BJ (cell line): ENCODE measurements at regions of chr17 and their contacts with region 1.

Region 1: DNA sequence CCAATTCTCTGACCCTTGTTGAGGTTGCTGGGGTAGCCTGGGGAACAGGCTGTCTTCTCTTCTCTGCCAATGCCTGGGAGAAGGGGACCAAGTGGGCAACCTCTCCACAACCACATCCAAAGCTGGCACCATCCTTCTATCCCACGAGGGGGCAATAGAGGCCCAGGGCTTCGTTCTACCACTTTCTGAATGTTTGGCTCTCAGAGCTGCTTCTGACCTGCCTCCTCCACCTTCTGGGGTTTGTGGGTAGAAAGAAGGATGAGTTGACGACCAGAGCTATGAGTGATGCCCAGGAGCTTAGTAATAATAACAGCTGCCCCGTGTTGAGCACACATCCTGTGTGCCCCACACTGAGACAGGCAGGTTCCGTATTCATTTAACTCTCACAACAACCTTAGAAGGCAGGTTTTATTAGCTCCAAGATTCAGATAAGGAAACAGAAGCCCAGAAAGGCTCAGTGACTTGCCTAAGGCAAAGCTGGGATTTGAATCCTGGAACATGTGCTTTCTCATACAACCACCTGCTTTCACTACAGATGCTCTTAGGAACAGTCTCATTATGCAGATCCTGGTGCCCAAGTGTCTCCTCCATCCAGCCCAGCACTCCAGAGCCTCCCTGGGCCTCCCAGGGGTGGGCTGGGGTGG is 11.1 kb downstream of the TSPOAP1 start:
- DNase-seq: peak; percentile 14
- H3K4me3 ChIP-seq: no peak overlapping the region
- H3K27me3 ChIP-seq: no peaks in the 10 kb centered on the region
- CTCF ChIP-seq: peak; percentile 84

Region 2: DNA sequence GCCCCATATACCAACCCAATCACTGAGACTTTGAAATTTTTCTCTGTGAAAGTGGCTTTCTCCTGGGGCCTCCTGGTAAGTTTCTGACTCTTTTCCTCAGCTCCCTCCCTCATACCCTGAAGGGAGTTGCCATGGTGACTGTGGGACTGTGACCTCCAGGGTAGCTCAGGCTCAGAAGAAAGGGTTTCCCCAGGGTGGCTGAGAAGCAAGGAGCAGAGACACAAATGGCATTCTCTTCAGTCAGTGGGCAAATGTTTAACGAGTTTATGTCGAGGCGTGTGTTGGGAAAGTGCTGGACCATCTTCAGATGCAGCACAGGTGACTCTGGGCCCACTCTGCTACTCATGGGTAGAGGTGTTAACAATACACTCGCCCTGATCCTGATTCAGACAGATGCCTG is 514.5 kb before region 1 on chr17:
- CTCF ChIA-PET with region 1: no interaction called
- POLR2A ChIA-PET with region 1: no interaction called
- DNase-seq: no peak
- H3K4me3 ChIP-seq: no peak overlapping the region
- H3K27me3 ChIP-seq: peaks cover 1% of the 10 kb centered on the region
- CTCF ChIP-seq: no peak

Region 3: DNA sequence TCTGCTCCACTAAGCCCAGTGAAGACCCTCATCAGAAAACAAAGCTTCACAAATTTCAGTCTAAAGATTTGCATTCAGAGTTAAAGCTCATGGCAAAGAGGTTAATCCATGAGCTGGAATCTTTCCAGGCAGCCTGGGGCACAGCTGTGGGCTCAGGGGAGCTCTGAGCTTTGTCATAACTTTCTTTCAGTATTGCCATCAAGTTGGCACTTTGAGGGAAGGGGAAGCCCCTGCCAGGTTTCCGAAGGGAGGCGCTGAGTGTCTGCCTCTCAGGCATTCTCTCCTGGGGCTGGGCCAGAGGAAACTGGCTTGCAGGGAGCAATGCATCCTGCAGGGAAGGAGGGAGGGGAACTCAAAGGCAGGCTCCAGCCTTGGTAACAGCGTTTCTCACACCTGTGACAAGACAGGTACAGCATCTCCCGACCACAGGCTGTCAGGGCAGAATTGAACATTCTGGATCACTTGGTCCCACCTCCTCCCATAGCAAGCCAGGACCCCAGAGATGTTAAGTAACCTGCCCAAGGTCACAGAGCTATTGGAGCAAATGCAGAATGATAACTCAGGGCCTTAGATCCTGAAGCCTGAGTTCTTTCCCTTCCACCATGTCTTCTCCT is 75.3 kb before region 1 on chr17:
- CTCF ChIA-PET with region 1: no interaction called
- POLR2A ChIA-PET with region 1: no interaction called
- DNase-seq: no peak
- H3K4me3 ChIP-seq: no peak overlapping the region
- H3K27me3 ChIP-seq: peaks cover 16% of the 10 kb centered on the region
- CTCF ChIP-seq: no peak

Region 4: DNA sequence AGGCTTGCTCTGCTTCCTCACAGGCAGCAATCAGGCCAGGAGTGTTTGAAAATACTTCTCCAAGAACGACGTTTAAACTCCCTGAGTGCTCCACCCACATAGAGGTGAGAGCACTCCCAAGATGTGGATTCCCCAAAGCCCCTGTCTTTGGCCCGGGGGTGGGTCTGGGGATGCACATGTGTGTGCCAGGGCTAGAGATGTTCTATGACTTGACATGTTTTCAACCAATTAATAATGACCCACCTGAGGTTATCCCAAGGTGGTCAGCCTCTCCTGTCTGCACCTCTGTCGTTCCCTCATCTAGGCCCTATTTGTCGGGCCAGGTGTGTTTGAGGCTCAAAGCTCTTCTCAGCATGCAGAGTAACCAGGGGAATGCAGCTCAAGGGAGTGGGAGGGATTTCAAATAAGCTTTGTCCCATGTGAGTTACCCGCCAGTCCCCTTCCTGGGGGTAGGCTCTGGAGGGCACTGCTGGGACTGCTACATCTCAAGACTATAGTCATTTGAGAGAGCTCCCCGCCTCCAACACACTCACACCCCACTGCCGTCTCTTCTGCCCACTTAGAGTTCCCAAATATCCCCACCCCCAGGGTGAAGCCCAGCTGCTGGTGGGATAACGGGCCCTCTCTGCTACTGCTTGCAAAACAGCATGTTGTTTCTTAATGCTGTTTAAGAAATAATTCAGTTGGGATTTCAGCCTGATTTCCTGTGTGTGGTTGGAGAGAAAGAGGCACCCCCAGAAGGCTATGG is 33.0 kb before region 1 on chr17:
- CTCF ChIA-PET with region 1: interaction called, 3 read pairs
- POLR2A ChIA-PET with region 1: interaction called, 12 read pairs
- DNase-seq: no peak
- H3K4me3 ChIP-seq: no peak overlapping the region
- H3K27me3 ChIP-seq: peaks cover 6% of the 10 kb centered on the region
- CTCF ChIP-seq: no peak

Region 5: GRCh38 chr17:58328195-58329034 is 10.9 kb after region 1 on chr17 and contains the start of gene TSPOAP1:
- CTCF ChIA-PET with region 1: interaction called, 21 read pairs
- POLR2A ChIA-PET with region 1: no interaction called
- DNase-seq: no peak
- H3K4me3 ChIP-seq: no peak within 1 kb of the TSS
- H3K27me3 ChIP-seq: no peaks in the 10 kb centered on the region
- CTCF ChIP-seq: no peak
- polyA plus RNA-seq, gene TSPOAP1: 3.9 and 5.6 TPM in 2 replicates

Region 6: DNA sequence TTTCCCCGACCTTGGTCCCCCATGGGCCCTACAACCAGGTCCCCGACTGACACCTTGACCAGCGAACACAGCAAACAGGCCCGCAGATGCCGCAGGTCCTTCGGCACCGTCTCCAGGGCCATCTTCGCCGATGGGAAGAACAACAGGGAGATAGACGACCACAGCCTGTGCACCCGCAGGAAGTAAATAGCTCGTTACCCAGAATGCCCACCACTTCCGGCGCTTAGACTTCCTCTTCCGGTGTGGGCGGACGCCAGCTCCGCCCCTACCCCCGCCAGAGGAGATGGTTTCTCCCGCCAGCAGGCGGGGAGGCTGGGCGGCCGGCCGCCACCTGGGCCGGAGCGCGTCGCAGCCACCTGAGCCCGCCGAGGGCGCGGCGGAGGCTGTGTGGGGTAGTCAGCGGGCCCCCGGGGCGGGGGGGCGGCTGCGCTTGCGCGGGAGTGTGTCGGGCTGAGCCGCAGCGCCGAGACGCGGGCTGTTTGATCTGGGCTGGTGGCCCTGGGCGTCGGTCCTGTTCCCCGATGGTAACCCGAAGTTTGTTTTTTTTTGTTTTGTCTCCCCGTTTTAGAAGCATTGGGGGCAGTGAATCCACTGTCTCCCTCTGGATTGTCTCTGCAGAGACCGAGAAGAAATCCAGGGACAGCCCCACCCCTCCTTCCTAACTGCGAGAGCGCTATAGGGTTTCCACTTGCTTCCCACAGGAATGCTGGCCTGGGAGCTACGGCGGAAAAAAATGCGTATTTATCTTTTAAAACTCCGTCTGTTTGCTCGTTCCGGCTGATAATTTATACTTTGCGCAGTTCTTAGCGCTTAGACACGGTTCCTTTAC is 34.7 kb after region 1 on chr17 and contains the start of gene SUPT4H1:
- CTCF ChIA-PET with region 1: interaction called, 28 read pairs
- POLR2A ChIA-PET with region 1: interaction called, 3 read pairs
- DNase-seq: peak; percentile 39
- H3K4me3 ChIP-seq: peak within 1 kb of the TSS; percentile 74
- H3K27me3 ChIP-seq: 0 out of 2 replicates have a peak, but pooled peaks cover 1% of the 10 kb centered on the region
- CTCF ChIP-seq: no peak
- polyA plus RNA-seq, gene SUPT4H1: 145 and 215 TPM in 2 replicates

Region 7: DNA sequence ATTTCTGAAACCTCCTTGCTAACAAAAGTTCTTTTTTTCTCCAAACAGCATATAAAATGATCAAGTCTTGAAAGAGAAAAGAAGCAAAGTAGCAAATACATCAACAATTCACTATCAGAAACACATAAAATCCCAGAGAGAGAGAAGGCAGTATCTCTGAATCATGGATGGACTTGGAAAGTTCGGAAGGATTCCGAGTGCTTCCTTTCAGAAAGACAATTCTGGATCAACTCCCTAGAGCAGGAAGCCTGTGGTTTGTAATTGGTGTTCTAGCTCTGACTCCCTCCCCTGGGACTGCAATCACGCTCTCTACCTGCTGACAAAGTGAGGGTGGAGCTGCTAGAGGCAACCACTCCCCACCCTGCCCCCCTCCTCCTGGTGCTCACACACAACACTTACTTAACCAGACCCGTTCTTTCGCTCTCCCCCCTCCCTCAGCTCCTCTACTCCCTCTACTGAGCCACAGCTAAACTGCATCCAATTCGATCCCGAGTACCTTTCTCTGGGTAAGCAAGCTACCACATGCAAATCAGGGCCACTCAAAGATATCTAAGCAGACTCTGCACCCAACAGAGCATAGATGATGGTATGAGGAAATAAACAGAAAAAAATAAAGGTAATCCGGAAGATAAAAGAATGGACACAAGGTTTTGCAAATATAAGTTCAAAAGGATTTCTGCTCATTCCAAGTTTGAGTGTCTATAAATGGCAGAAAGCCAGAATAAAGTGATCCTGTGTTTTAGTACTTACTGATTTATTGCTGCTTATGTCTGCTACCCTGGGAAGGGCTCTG is 100.0 kb after region 1 on chr17 and contains the start of gene RNF43:
- CTCF ChIA-PET with region 1: interaction called, 95 read pairs
- POLR2A ChIA-PET with region 1: interaction called, 3 read pairs
- DNase-seq: peak; percentile 41
- H3K4me3 ChIP-seq: peak within 1 kb of the TSS; percentile 31; the same call in 1 of the 2 replicates
- H3K27me3 ChIP-seq: peaks cover 2% of the 10 kb centered on the region; the same call in 1 of the 2 replicates
- CTCF ChIP-seq: peak; percentile 93
- polyA plus RNA-seq, gene RNF43: not detected in 2 replicates

Region 8: GRCh38 chr17:58436805-58437239 is 119.3 kb after region 1 on chr17:
- CTCF ChIA-PET with region 1: interaction called, 11 read pairs
- POLR2A ChIA-PET with region 1: no interaction called
- DNase-seq: no peak
- H3K4me3 ChIP-seq: no peak overlapping the region
- H3K27me3 ChIP-seq: no peaks in the 10 kb centered on the region
- CTCF ChIP-seq: no peak

Region 9: DNA sequence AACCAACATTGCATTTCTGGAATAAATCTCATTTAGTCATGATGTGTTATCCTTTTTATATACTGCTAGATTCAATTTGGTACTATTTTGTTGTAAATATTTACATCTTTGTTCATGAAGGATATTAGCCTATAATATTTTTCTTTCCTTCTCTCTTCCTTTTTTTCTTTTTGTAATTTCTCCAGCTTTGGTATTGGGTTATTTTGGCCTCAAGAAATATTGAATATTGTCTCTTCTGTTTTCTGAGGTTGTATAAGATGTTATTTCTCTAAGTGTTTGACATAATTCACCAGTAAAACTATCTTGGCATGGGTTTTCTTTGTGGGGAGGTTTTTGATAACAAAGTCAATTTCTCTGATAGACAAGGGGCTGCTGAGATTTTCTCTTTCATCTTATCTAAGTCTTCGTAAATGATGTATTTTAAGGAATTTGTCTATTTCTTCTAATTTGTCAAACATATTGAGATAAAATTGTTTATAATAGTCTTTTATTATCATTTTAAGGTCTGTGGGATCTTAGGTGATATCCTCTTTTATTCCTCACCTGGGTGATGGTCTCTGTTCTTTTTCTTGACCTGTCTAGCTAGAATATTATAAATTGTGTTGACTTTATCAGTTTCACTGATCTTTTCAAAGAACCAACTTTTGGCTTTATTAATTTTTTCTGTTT is 482.8 kb after region 1 on chr17:
- CTCF ChIA-PET with region 1: no interaction called
- POLR2A ChIA-PET with region 1: no interaction called
- DNase-seq: no peak
- H3K4me3 ChIP-seq: no peak overlapping the region
- H3K27me3 ChIP-seq: no peaks in the 10 kb centered on the region
- CTCF ChIP-seq: no peak